CD8-positive, alpha-beta T cell (primary cell): ENCODE measurements at regions of chr19 and their contacts with region 1.

Region 1: GRCh38 chr19:38387550-38388348 is at the start of gene GGN:
- DNase-seq: peak; percentile 54 to 87 (median 76)
- ATAC-seq: peak; percentile 70
- H3K4me3 ChIP-seq: peak within 1 kb of the TSS; percentile 55 to 68
- H3K4me3 Mint-ChIP-seq: peak within 1 kb of the TSS; percentile 87
- H3K27ac ChIP-seq: no peak within 1 kb of the TSS
- H3K27ac Mint-ChIP-seq: peak within 1 kb of the TSS; percentile 82
- H3K4me1 ChIP-seq: peaks cover 36% of the 10 kb centered on the region
- H3K4me1 Mint-ChIP-seq: peaks cover 19% of the 10 kb centered on the region
- H3K27me3 ChIP-seq: peaks cover 4 to 13% of the 10 kb centered on the region in 2 experiments
- H3K27me3 Mint-ChIP-seq: peaks cover 29% of the 10 kb centered on the region
- CTCF ChIP-seq: no peak
- total RNA-seq, gene GGN: 0.67 TPM in 1 of 2 experiments, not detected in the other

Region 2: GRCh38 chr19:38115271-38115802 is 272.4 kb before region 1 on chr19:
- CTCF ChIA-PET with region 1: no interaction called
- POLR2A ChIA-PET with region 1: no interaction called
- intact Hi-C with region 1: no loop called
- DNase-seq: peak in 1 of 9 experiments; percentile 8
- ATAC-seq: no peak
- H3K4me3 ChIP-seq: no peak overlapping the region
- H3K4me3 Mint-ChIP-seq: no peak overlapping the region
- H3K27ac ChIP-seq: no peak overlapping the region
- H3K27ac Mint-ChIP-seq: peak overlapping the region; percentile 77
- H3K4me1 ChIP-seq: peaks cover 5% of the 10 kb centered on the region
- H3K4me1 Mint-ChIP-seq: peaks cover 14% of the 10 kb centered on the region
- H3K27me3 ChIP-seq: no peaks in the 10 kb centered on the region
- H3K27me3 Mint-ChIP-seq: no peaks in the 10 kb centered on the region
- CTCF ChIP-seq: no peak

Region 3: DNA sequence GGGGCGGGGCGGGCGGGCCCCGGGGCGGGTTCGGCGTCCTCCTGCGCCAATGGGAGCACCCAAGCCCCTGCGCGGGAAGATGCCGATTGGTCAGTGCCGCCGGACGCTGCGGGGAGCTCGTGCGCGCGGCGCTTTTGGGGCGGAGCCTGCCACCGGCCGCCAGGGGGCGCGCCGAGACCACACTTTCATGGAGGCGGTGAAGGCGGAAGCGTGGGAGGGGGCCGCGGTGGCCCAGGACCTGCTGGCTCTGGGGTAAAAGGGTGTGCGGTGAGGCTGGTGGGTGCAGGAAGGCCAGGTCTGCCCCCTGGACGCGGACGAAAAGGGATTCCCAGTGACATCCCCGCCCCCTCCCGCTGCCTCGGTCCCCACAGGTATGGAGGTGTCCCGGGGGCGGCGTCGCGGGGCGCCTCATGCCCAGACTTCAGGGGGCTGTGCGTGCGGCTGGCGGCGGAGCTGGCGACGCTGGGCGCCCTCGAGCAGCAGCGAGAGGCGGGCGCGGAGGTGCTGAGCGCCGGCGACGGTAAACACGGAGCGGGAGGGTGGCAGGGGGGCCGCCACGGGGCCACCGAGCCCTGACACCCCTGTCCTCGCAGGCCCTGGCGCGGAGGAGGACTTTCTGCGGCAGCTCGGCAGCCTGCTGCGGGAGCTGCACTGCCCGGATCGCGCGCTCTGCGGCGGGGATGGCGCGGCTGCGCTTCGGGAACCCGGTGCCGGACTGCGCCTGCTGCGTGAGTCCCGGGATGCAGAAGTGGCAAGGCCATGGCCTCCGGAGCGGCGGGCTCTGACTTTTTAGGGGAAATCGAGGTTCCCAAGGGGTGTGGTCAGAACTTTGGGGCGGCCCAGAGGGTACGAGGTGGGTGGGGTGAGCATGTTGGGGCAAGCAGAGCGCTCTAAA is 15.5 kb after region 1 on chr19 and contains the start of gene FAM98C:
- CTCF ChIA-PET with region 1: interaction called, 15 read pairs
- POLR2A ChIA-PET with region 1: interaction called, 26 read pairs
- intact Hi-C with region 1: loop called (anchors 1 kb)
- DNase-seq: peak; percentile 95 to 99 (median 97)
- ATAC-seq: peak; percentile 96
- H3K4me3 ChIP-seq: peak within 1 kb of the TSS; percentile 76 to 95
- H3K4me3 Mint-ChIP-seq: peak within 1 kb of the TSS; percentile 94
- H3K27ac ChIP-seq: peak within 1 kb of the TSS; percentile 79 to 81
- H3K27ac Mint-ChIP-seq: peak within 1 kb of the TSS; percentile 98
- H3K4me1 ChIP-seq: peaks cover 11% of the 10 kb centered on the region
- H3K4me1 Mint-ChIP-seq: peaks cover 15% of the 10 kb centered on the region
- H3K27me3 ChIP-seq: no peaks in the 10 kb centered on the region
- H3K27me3 Mint-ChIP-seq: no peaks in the 10 kb centered on the region
- CTCF ChIP-seq: peak; percentile 95
- total RNA-seq, gene FAM98C: 28.2 to 29.3 TPM

Region 4: GRCh38 chr19:38425810-38426466 is 38.2 kb after region 1 on chr19 and contains the start of gene RASGRP4:
- CTCF ChIA-PET with region 1: no interaction called
- POLR2A ChIA-PET with region 1: no interaction called
- intact Hi-C with region 1: no loop called
- DNase-seq: peak in 7 of 9 experiments; percentile 5 to 68 (median 33)
- ATAC-seq: peak; percentile 93
- H3K4me3 ChIP-seq: no peak within 1 kb of the TSS
- H3K4me3 Mint-ChIP-seq: peak within 1 kb of the TSS; percentile 54
- H3K27ac ChIP-seq: no peak within 1 kb of the TSS
- H3K27ac Mint-ChIP-seq: no peak within 1 kb of the TSS
- H3K4me1 ChIP-seq: peaks cover 8% of the 10 kb centered on the region
- H3K4me1 Mint-ChIP-seq: peaks cover 7% of the 10 kb centered on the region
- H3K27me3 ChIP-seq: no peaks in the 10 kb centered on the region
- H3K27me3 Mint-ChIP-seq: peaks cover 10% of the 10 kb centered on the region
- CTCF ChIP-seq: no peak
- total RNA-seq, gene RASGRP4: not detected

Region 5: DNA sequence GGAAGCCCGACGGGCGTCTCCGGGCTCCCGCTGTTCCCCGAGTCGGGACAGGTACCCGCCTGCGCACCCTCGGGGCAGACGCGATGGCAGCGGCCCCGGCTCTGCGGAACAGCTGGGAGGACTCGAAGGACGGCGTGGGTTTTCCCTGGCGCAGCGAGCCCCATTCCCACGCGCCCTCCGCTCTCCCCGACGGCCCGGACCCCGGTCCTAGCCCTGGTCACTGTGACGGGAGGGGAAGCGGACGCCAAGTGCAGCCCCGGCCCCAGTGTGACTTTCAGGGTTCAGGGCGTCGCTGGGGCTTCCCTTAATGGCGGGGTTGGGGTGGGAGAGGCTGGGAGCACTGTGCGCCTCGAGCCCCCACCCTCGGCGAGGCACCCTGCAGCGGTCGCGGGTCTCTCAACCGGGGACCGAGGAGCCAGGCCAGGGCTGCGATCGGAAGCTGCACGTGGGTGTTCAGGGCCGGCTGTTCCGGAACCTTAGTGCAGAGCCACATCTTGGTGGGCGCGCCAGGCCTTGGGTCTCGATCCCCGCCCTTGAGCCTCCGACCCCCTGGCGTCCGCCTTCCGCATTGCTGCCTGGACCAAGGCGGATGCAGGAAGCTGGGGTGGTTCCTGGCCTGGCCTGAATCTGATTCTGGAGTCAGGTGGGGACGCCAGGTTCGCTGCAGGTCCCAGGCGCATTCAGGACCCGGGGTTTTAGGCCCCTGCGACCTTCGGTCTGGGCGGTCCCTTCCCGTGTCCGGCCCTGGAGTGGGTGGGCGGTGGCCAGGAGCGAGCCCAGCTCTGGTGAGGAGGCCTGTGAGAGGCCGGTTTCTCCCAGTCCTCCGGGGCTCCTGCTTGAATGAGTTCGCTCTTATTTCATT is 404.7 kb after region 1 on chr19:
- CTCF ChIA-PET with region 1: no interaction called
- POLR2A ChIA-PET with region 1: no interaction called
- intact Hi-C with region 1: no loop called
- DNase-seq: peak in 8 of 9 experiments; percentile 9 to 62 (median 44)
- ATAC-seq: peak; percentile 36
- H3K4me3 ChIP-seq: peak overlapping the region; percentile 30 to 43
- H3K4me3 Mint-ChIP-seq: peak overlapping the region; percentile 63
- H3K27ac ChIP-seq: no peak overlapping the region
- H3K27ac Mint-ChIP-seq: no peak overlapping the region
- H3K4me1 ChIP-seq: peaks cover 7% of the 10 kb centered on the region
- H3K4me1 Mint-ChIP-seq: peaks cover 4% of the 10 kb centered on the region
- H3K27me3 ChIP-seq: no peaks in the 10 kb centered on the region
- H3K27me3 Mint-ChIP-seq: no peaks in the 10 kb centered on the region
- CTCF ChIP-seq: no peak